Activated T-helper 1 cell treated with anti-CD3 and anti-CD28 coated beads, Interleukin-12 subunit alpha, Interleukin-12 subunit beta, Interleukin-2, Interleukin-4 antibody, amounts not matched to agents 30 ng/mL and 10 ng/mL and 1 ng/mL, durations not matched to agents 14 hours and 24 hours and 36 hours (primary cell): ENCODE measurements at regions of chr12 and their contacts with region 1.

Region 1: GRCh38 chr12:113048716-113049127 is 7.8 kb upstream of the DTX1 start:
- DNase-seq: peak; percentile 48
- H3K4me3 Mint-ChIP-seq: no peak overlapping the region
- H3K27ac Mint-ChIP-seq: no peak overlapping the region
- H3K4me1 Mint-ChIP-seq: no peaks in the 10 kb centered on the region
- H3K27me3 Mint-ChIP-seq: peaks cover 14% of the 10 kb centered on the region

Region 2: GRCh38 chr12:112992541-112993398 is 56.0 kb before region 1 on chr12:
- intact Hi-C with region 1: loop called (anchors 2 kb)
- DNase-seq: peak; percentile 43
- H3K4me3 Mint-ChIP-seq: no peak overlapping the region
- H3K27ac Mint-ChIP-seq: peak overlapping the region; percentile 43
- H3K4me1 Mint-ChIP-seq: peaks cover 57% of the 10 kb centered on the region
- H3K27me3 Mint-ChIP-seq: no peaks in the 10 kb centered on the region

Region 3: DNA sequence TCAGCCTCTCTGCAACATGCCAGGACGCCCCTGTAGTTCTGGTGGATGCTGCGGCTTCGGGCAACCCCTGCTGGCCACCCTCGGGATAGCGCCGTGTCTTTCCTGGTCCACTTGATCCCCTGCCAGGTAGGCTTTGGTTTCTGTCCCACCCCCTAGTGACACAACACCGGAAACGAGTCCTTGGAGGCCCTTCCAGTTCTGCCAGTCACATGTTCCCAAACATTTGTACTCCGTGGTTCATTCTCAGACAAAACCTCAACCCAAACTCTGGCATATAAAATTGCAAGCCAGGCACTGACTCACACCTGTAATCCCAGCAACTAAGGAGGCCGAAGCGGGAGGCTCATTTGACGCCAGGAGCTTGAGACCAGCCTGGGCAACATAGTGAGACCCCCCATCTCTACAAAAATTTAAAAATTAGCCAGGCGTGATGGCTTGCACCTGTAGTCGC is 49.7 kb after region 1 on chr12:
- intact Hi-C with region 1: loop called (anchors 1 kb)
- DNase-seq: peak; percentile 24
- H3K4me3 Mint-ChIP-seq: no peak overlapping the region
- H3K27ac Mint-ChIP-seq: no peak overlapping the region
- H3K4me1 Mint-ChIP-seq: no peaks in the 10 kb centered on the region
- H3K27me3 Mint-ChIP-seq: no peaks in the 10 kb centered on the region

Region 4: GRCh38 chr12:113152835-113153814 is 104.4 kb after region 1 on chr12:
- intact Hi-C with region 1: loop called (anchors 1 kb)
- DNase-seq: peak; percentile 35
- H3K4me3 Mint-ChIP-seq: peak overlapping the region; percentile 65
- H3K27ac Mint-ChIP-seq: no peak overlapping the region
- H3K4me1 Mint-ChIP-seq: no peaks in the 10 kb centered on the region
- H3K27me3 Mint-ChIP-seq: peaks cover 24% of the 10 kb centered on the region

Region 5: DNA sequence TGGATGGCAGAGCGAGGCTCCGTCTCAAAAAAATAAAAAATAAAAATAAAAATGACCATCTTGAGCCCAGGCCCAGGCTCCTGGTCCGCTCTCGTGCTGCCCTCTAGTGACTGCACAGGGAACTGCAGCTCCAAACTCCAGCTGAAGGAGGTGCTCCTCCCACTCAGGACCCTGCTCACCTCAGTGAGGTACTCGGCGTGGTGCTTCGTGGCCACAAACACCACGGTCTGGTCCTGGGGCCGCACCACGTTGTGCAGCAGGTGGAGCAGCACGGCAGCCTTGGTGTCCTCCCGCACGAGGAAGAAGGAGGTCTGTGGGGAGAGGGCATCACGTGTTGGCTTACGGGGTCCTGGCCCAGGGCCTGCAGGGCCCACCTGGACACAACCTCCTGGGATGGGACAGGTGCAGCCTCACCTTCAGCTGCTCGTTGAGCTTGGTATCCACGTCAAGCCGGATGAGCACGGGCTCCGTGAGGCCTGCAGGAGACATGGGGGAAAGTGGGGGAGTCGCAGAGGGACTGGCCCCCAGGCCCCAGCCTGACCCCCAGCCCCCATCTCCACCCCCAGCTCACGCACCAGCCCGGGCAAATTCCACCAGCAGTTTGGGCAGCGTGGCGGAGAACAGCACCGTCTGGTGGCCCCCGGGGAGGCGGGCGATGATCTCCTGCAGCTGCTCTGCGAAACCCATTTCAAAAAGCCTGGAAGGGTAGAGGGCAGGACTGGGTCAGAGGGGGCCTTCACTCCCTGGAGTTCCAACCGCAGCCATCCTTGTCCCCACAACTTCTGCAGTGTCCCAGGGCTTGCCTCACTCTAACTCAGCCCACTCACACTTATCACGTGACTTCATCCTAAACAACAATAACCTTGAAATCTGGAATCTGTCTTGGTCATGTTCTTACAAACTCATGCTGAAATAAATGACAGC is 126.0 kb after region 1 on chr12:
- intact Hi-C with region 1: loop called (anchors 1 kb)
- DNase-seq: peak; percentile 55
- H3K4me3 Mint-ChIP-seq: no peak overlapping the region
- H3K27ac Mint-ChIP-seq: no peak overlapping the region
- H3K4me1 Mint-ChIP-seq: peaks cover 4% of the 10 kb centered on the region
- H3K27me3 Mint-ChIP-seq: no peaks in the 10 kb centered on the region

Region 6: GRCh38 chr12:113422030-113422885 is 373.5 kb after region 1 on chr12 and contains the start of gene SDSL:
- intact Hi-C with region 1: loop called (anchors 10 kb)
- DNase-seq: peak; percentile 17
- H3K4me3 Mint-ChIP-seq: peak within 1 kb of the TSS; percentile 81
- H3K27ac Mint-ChIP-seq: peak within 1 kb of the TSS; percentile 79
- H3K4me1 Mint-ChIP-seq: peaks cover 11% of the 10 kb centered on the region
- H3K27me3 Mint-ChIP-seq: peaks cover 4% of the 10 kb centered on the region
- total RNA-seq, gene SDSL: 0.52 and 0.54 TPM in 2 replicates